Natural killer cell (primary cell): ENCODE measurements at regions of chr2 and their contacts with region 1.

Region 1: GRCh38 chr2:195656859-195657633 is at the start of gene SLC39A10:
- DNase-seq: peak; percentile 96 to 99
- ATAC-seq: peak; percentile 82 to 92 (median 83)
- H3K4me3 ChIP-seq: peak within 1 kb of the TSS; percentile 98
- H3K4me3 Mint-ChIP-seq: peak within 1 kb of the TSS; percentile 96
- H3K27ac ChIP-seq: peak within 1 kb of the TSS; percentile 99
- H3K27ac Mint-ChIP-seq: peak within 1 kb of the TSS; percentile 98 to 100
- H3K4me1 ChIP-seq: peaks cover 11% of the 10 kb centered on the region
- H3K4me1 Mint-ChIP-seq: peaks cover 38 to 42% of the 10 kb centered on the region in 2 donors
- H3K27me3 ChIP-seq: no peaks in the 10 kb centered on the region
- H3K27me3 Mint-ChIP-seq: no peaks in the 10 kb centered on the region
- CTCF ChIP-seq: no peak
- total RNA-seq, gene SLC39A10: 56.5 to 69.6 (median 58.5) TPM

Region 2: GRCh38 chr2:195407782-195408181 is 249.3 kb before region 1 on chr2:
- intact Hi-C with region 1: loop called (anchors 2 kb)
- DNase-seq: no peak
- ATAC-seq: no peak
- H3K4me3 ChIP-seq: no peak overlapping the region
- H3K4me3 Mint-ChIP-seq: no peak overlapping the region
- H3K27ac ChIP-seq: no peak overlapping the region
- H3K27ac Mint-ChIP-seq: no peak overlapping the region
- H3K4me1 ChIP-seq: no peaks in the 10 kb centered on the region
- H3K4me1 Mint-ChIP-seq: no peaks in the 10 kb centered on the region
- H3K27me3 ChIP-seq: no peaks in the 10 kb centered on the region
- H3K27me3 Mint-ChIP-seq: no peaks in the 10 kb centered on the region
- CTCF ChIP-seq: no peak

Region 3: DNA sequence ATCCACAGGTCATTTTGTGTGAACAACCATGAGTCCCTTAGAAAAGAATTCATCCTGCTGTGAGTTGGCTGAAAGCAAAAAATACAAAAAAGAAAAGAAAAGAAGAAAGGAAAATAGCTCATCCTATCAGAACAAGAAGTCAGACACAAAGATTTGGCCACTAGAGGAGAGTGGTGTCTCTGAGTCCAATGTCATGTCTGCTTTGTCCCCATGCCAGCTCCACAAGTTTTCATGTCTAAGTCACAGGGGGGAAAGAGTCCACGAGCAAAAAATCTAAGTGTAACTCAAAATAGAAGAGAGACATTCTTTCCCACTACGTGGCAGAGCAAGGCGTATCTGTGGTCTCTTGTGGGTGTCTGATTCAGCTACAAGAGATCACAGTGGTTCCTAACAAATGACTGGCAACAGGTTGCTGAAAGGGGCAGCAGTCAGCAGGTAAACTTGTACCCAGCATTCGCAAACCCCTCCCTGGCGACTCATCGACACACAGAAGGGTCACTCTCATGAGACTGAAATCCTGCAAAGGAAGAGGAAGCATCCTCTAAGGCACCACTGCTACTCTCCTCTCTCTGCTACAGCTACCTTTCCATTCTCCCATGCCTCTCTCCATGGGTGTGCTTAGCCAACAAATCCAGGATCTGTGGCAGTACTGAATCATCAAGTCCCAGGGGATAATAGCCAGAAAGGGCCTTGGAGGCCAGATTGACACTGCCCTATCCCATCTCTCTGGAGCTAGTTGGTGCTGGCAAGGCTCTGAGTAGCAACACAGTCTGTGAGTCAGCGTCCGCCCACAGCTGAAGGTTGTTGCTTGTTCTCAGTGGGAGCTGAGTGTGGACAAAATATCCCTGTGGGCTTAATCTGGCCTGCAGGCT is 123.0 kb before region 1 on chr2:
- intact Hi-C with region 1: loop called (anchors 2 kb)
- DNase-seq: peak; percentile 21 to 61
- ATAC-seq: peak; percentile 34 to 50 (median 39)
- H3K4me3 ChIP-seq: no peak overlapping the region
- H3K4me3 Mint-ChIP-seq: peak overlapping the region; percentile 89
- H3K27ac ChIP-seq: peak overlapping the region; percentile 55
- H3K27ac Mint-ChIP-seq: peak overlapping the region; percentile 63 to 91
- H3K4me1 ChIP-seq: peaks cover 41% of the 10 kb centered on the region
- H3K4me1 Mint-ChIP-seq: peaks cover 80 to 88% of the 10 kb centered on the region in 2 donors
- H3K27me3 ChIP-seq: no peaks in the 10 kb centered on the region
- H3K27me3 Mint-ChIP-seq: peaks cover 7 to 19% of the 10 kb centered on the region in 2 donors
- CTCF ChIP-seq: no peak

Region 4: GRCh38 chr2:196068271-196069209 is 411.5 kb after region 1 on chr2 and contains the start of gene DNAH7:
- intact Hi-C with region 1: loop called (anchors 5 kb)
- DNase-seq: peak; percentile 87 to 95
- ATAC-seq: peak; percentile 87 to 96 (median 92)
- H3K4me3 ChIP-seq: peak within 1 kb of the TSS; percentile 50
- H3K4me3 Mint-ChIP-seq: peak within 1 kb of the TSS; percentile 89
- H3K27ac ChIP-seq: peak within 1 kb of the TSS; percentile 61
- H3K27ac Mint-ChIP-seq: peak within 1 kb of the TSS; percentile 70 to 87
- H3K4me1 ChIP-seq: peaks cover 12% of the 10 kb centered on the region
- H3K4me1 Mint-ChIP-seq: peaks cover 11 to 16% of the 10 kb centered on the region in 2 donors
- H3K27me3 ChIP-seq: no peaks in the 10 kb centered on the region
- H3K27me3 Mint-ChIP-seq: no peaks in the 10 kb centered on the region
- CTCF ChIP-seq: peak; percentile 76
- total RNA-seq, gene DNAH7: 0.07 to 0.20 TPM in 2 of 3 donors, not detected in the other

Region 5: GRCh38 chr2:196239622-196240587 is 582.9 kb after region 1 on chr2:
- intact Hi-C with region 1: loop called (anchors 5 kb)
- DNase-seq: peak; percentile 74 to 92
- ATAC-seq: peak; percentile 66 to 89 (median 84)
- H3K4me3 ChIP-seq: peak overlapping the region; percentile 9
- H3K4me3 Mint-ChIP-seq: peak overlapping the region; percentile 80
- H3K27ac ChIP-seq: peak overlapping the region; percentile 91
- H3K27ac Mint-ChIP-seq: peak overlapping the region; percentile 97
- H3K4me1 ChIP-seq: peaks cover 61% of the 10 kb centered on the region
- H3K4me1 Mint-ChIP-seq: peaks cover 64 to 74% of the 10 kb centered on the region in 2 donors
- H3K27me3 ChIP-seq: no peaks in the 10 kb centered on the region
- H3K27me3 Mint-ChIP-seq: no peaks in the 10 kb centered on the region
- CTCF ChIP-seq: no peak